ENCODE measurements at regions of chr3 and their contacts with region 1.

Region 1: GRCh38 chr3:161274719-161275298 is 53.7 kb downstream of the NMD3 start:
- DNase-seq: peak; percentile 86
- H3K4me3 Mint-ChIP-seq: no peak overlapping the region
- H3K27ac Mint-ChIP-seq: no peak overlapping the region
- H3K4me1 Mint-ChIP-seq: no peaks in the 10 kb centered on the region
- H3K27me3 Mint-ChIP-seq: peaks cover 4% of the 10 kb centered on the region

Region 2: DNA sequence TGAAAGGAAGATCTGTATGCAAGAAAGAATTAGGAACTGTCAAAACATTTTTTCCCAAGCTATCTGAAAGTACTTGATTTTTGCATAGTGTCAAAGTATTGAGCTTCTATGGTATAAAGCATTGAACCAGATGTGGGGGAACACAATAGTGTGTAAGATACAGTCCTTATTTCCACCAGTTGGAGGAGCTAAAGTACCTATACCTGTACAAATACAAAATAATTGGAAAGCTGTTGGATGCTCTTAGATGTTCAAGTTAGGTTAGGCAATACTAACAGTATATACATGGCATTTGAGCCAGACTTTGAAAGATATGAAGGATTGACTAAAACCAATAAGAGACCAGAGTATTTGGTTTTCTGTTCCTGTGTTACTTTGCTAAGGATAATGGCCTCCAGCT is 318.0 kb before region 1 on chr3:
- intact Hi-C with region 1: loop called (anchors 2 kb)
- DNase-seq: no peak
- H3K4me3 Mint-ChIP-seq: no peak overlapping the region
- H3K27ac Mint-ChIP-seq: no peak overlapping the region
- H3K4me1 Mint-ChIP-seq: no peaks in the 10 kb centered on the region
- H3K27me3 Mint-ChIP-seq: peaks cover 5% of the 10 kb centered on the region

Region 3: DNA sequence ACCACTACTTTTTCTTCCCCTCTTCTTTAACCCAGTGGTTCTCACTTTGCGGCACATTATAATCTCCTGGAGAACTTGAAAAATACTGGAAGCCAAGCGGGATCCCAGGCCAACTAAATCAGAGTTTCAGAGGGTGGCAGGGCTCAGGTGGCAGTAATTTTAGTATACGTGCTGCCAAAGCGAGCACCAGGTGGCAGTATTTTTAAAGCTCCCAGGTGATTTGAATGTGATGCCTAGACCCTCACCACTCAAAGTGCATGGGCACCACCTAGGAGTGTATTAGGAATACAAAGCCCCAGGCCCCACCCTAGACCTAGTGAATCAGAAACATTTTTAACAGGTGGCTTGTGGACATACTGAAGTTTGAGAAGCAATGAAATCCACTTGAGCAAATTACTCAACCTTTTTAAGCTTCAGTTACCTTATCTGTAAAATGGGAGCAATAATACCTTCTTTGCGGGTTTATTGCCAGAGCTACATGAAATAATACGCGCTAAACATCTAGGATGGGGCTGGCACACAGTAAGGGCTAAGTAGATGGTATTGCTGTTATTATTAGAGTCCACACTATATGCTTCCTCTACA is 177.9 kb before region 1 on chr3:
- intact Hi-C with region 1: loop called (anchors 1 kb)
- DNase-seq: peak; percentile 63
- H3K4me3 Mint-ChIP-seq: no peak overlapping the region
- H3K27ac Mint-ChIP-seq: no peak overlapping the region
- H3K4me1 Mint-ChIP-seq: no peaks in the 10 kb centered on the region
- H3K27me3 Mint-ChIP-seq: peaks cover 3% of the 10 kb centered on the region

Region 4: GRCh38 chr3:161409069-161409468 is 134.3 kb after region 1 on chr3:
- intact Hi-C with region 1: loop called (anchors 5 kb)
- DNase-seq: peak; percentile 76
- H3K4me3 Mint-ChIP-seq: no peak overlapping the region
- H3K27ac Mint-ChIP-seq: no peak overlapping the region
- H3K4me1 Mint-ChIP-seq: peaks cover 3% of the 10 kb centered on the region
- H3K27me3 Mint-ChIP-seq: peaks cover 51% of the 10 kb centered on the region

Region 5: GRCh38 chr3:161423911-161424522 is 149.2 kb after region 1 on chr3:
- intact Hi-C with region 1: loop called (anchors 1 kb)
- DNase-seq: no peak
- H3K4me3 Mint-ChIP-seq: no peak overlapping the region
- H3K27ac Mint-ChIP-seq: no peak overlapping the region
- H3K4me1 Mint-ChIP-seq: no peaks in the 10 kb centered on the region
- H3K27me3 Mint-ChIP-seq: peaks cover 5% of the 10 kb centered on the region

Measured in activated CD4-positive, alpha-beta T cell treated with anti-CD3 and anti-CD28 coated beads, Interleukin-2, amount 10 ng/mL, durations not matched to agents 24 days and 14 days (primary cell).